H1 (cell line): ENCODE measurements at regions of chr19 and their contacts with region 1.

Region 1: DNA sequence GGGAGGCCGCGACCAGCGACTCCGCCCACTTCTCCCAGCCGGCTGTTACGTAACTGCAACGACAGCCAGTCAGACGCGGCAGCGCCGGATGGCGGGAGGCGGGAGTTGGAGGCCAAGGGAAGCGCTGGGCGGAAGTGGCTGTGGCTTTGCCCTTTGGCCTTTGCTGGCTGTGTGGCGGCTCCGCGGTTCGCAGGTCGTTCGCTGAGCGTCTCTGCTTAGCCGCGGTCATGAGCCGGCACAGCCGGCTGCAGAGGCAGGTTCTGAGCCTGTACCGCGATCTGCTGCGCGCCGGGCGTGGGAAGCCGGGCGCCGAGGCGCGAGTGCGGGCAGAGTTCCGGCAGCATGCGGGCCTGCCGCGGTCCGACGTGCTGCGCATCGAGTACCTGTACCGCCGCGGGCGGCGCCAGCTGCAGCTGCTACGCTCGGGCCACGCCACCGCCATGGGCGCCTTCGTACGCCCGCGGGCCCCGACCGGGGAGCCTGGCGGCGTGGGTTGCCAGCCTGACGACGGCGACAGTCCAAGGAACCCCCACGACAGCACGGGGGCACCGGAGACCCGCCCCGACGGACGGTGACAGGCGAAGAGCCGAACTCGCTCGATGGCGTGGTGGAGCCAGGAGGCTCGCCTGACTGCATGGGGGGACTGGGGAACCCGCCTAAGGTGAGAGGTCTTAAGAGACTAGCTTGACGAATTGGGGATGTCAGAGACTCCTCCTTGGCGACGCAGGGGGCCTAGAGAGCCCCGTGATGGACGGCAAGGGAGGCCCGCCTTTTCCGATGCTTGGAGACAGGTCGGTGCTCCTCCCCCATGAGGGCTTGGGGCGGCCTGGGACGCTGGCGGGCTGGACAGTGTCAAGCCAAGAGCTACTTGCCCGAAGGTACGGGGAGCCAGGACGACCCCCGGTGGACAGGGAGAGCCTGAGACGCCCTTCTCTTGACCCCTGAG is at the start of gene SDHAF1:
- DNase-seq: peak; percentile 77 to 95
- H3K4me3 ChIP-seq: peak within 1 kb of the TSS; percentile 75 to 94 (median 80)
- H3K27ac ChIP-seq: no peak within 1 kb of the TSS
- H3K4me1 ChIP-seq: peaks cover 0 to 5% (median 1%) of the 10 kb centered on the region in 4 experiments; a peak in 4 of 7 replicates
- H3K27me3 ChIP-seq: no peaks in the 10 kb centered on the region
- CTCF ChIP-seq: no peak
- EP300 ChIP-seq: no peak
- POLR2A ChIP-seq: no peak
- RAD21 ChIP-seq: peak in 1 of 2 experiments; percentile 23; a peak in 1 of 4 replicates
- total RNA-seq, gene SDHAF1: 16.0 and 16.8 TPM in 2 replicates

Region 2: DNA sequence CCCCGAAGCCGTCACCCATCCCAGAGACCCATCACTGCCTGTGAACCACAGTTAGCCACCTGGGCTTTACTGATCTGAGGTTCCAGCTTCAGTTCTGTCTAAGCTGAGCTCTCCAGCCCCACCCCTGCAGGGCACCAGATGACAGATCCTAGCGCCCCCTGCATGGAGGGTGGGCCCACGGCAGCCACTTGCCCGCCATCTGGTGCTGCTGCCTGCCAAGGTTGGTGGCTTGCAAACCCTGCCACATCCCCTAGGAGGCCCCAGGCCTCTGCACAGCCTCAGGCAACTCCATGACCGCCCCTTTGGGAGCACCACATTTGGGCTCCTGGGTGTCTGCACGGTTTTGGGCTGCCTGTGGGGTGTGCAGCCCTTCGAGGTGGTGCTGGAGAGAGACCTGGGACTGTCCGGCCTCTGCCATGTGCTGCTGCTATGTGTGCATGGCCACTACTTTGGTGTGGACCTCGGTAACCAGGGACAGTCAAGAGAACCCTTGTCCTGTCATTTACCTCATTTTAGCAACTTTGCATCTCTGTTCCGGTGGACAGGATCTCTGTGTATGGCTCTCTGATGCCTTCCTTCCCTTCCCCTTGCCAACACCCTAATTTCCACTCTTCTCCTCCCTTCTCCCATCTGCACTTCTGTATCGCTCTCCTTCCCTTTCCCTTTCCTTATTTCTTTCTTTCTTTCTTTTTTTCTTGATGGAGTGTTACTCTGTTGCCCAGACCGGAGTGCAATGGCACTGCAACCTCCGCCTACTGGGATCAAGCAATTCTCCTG is 17.7 kb before region 1 on chr19:
- CTCF ChIA-PET with region 1: interaction called, 18 read pairs
- POLR2A ChIA-PET with region 1: interaction called, 3 read pairs
- DNase-seq: peak in 1 of 2 experiments; percentile 86
- H3K4me3 ChIP-seq: no peak overlapping the region
- H3K27ac ChIP-seq: no peak overlapping the region
- H3K4me1 ChIP-seq: peaks cover 0 to 6% (median 1%) of the 10 kb centered on the region in 4 experiments; a peak in 6 of 7 replicates
- H3K27me3 ChIP-seq: peaks cover 0 to 2% (median 0%) of the 10 kb centered on the region in 4 experiments; a peak in 1 of 7 replicates
- CTCF ChIP-seq: peak; percentile 86 to 98 (median 93)
- EP300 ChIP-seq: 0 out of 3 replicates have a peak, but pooled peaks of 1 of the 2 experiments have one; percentile 31
- POLR2A ChIP-seq: no peak
- RAD21 ChIP-seq: peak; percentile 65 to 79

Region 3: DNA sequence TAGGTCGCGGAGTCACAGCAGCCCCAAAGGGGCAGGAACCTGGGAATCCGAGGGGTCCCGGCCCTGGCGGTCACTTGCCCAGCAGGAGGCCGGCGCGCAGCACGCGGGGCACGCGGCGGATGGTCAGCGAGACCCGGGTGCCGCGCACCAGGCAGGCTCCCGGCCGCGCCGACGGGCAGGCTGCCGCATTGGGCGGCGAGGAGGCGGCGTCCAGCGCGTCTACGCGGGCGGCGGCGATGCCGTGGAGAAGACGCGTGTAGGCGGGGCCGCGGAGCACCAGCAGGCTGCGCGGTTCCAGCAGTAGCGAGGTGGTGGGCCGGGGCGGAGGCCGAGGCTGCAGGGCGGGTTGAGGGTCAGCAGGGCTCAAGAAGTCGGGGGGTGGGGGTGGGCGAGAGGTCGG is 13.9 kb after region 1 on chr19:
- CTCF ChIA-PET with region 1: interaction called, 19 read pairs
- POLR2A ChIA-PET with region 1: interaction called, 7 read pairs
- DNase-seq: peak in 1 of 2 experiments; percentile 82
- H3K4me3 ChIP-seq: peak overlapping the region; percentile 42 to 78 (median 52)
- H3K27ac ChIP-seq: no peak overlapping the region
- H3K4me1 ChIP-seq: peaks cover 0 to 16% (median 8%) of the 10 kb centered on the region in 4 experiments; a peak in 5 of 7 replicates
- H3K27me3 ChIP-seq: no peaks in the 10 kb centered on the region
- CTCF ChIP-seq: no peak
- EP300 ChIP-seq: no peak
- POLR2A ChIP-seq: no peak
- RAD21 ChIP-seq: no peak

Region 4: GRCh38 chr19:36054119-36054732 is 58.9 kb after region 1 on chr19 and contains the start of gene THAP8:
- CTCF ChIA-PET with region 1: interaction called, 13 read pairs
- POLR2A ChIA-PET with region 1: interaction called, 8 read pairs
- DNase-seq: peak; percentile 96 to 98
- H3K4me3 ChIP-seq: peak within 1 kb of the TSS; percentile 75 to 94 (median 82)
- H3K27ac ChIP-seq: peak within 1 kb of the TSS; percentile 83; the same call in 1 of the 2 replicates
- H3K4me1 ChIP-seq: peaks cover 0 to 11% (median 4%) of the 10 kb centered on the region in 4 experiments; a peak in 5 of 7 replicates
- H3K27me3 ChIP-seq: no peaks in the 10 kb centered on the region
- CTCF ChIP-seq: peak; percentile 18 to 36 (median 26); a peak in 2 of 4 replicates
- EP300 ChIP-seq: no peak
- POLR2A ChIP-seq: peak; percentile 74 to 88
- RAD21 ChIP-seq: no peak
- total RNA-seq, gene THAP8: 6.0 and 6.4 TPM in 2 replicates